ENCODE measurements at regions of chr3 and their contacts with region 1.

Region 1: DNA sequence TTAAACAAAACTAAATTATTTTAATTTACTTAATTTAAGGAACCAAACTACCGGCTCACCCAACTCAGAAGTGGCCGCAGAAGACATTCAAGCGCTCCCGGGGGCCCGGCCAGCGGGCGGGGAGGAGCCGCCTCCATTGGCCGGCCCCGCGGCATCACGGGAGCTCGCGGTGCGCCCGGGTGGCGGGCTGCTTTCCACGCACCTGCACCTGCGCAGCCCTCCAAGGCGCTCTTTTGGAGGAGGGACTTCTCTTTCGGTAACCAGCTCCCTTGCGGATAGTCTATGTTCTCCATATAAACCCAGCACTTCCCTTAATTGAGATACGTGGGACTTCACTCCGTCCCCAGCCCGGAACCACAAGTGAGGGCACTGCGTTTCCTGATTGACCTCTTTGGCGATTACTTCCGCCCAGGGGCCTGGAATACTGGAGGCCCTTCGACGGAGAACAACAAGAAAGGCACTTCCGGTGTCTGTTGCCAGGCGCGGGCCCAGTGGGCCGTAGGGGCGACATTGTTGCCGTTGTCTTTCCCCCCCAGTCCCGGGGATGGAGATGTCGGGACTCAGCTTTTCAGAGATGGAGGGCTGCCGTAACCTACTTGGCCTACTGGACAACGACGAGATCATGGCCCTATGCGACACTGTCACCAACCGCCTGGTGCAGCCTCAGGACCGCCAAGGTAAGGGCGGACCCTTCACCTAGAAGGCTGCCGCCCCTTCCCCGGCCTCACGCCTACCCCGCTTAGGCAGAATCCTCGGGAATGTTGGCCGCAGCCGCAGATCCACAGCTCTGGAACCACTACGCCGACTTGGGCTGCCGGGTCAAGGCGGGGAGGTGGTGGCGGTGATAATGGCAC is at the start of gene C3orf38:
- DNase-seq: peak; percentile 95
- H3K4me3 Mint-ChIP-seq: peak within 1 kb of the TSS; percentile 96
- H3K27ac Mint-ChIP-seq: peak within 1 kb of the TSS; percentile 99
- H3K4me1 Mint-ChIP-seq: peaks cover 39% of the 10 kb centered on the region
- H3K27me3 Mint-ChIP-seq: no peaks in the 10 kb centered on the region
- total RNA-seq, gene C3orf38: 19.9 and 24.1 TPM in 2 replicates

Region 2: GRCh38 chr3:87227104-87227834 is 922.5 kb before region 1 on chr3 and contains the start of gene CHMP2B:
- intact Hi-C with region 1: loop called (anchors 10 kb)
- DNase-seq: peak; percentile 97
- H3K4me3 Mint-ChIP-seq: peak within 1 kb of the TSS; percentile 100
- H3K27ac Mint-ChIP-seq: peak within 1 kb of the TSS; percentile 98
- H3K4me1 Mint-ChIP-seq: peaks cover 33% of the 10 kb centered on the region
- H3K27me3 Mint-ChIP-seq: peaks cover 25% of the 10 kb centered on the region
- total RNA-seq, gene CHMP2B: 25.3 and 27.2 TPM in 2 replicates

Region 3: DNA sequence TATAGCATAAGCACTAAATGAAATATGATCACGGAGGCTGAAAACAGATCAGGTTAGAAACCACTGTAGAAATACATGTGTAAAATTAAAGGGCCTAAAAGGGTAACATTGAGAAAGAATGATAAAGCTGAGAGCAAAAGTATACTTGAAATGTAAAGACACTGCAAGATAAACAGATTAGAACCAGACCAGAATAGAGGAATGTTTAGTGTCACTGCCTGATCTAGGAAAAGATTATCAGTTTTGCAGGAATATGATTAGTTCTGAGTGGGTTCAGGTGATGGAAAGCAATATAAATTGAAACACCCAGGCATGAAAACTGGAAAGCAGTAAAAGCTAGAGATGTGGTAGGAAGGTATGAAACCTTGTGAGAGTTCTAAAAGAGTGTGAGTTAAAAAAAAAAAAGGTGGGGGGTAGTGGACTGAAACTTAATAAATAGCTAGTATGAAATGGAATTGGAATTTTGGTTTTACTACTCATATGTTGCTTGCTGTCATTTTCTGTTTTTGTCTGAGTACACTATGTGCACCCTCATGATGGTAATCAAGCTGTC is 15.9 kb before region 1 on chr3:
- intact Hi-C with region 1: loop called (anchors 2 kb)
- DNase-seq: no peak
- H3K4me3 Mint-ChIP-seq: no peak overlapping the region
- H3K27ac Mint-ChIP-seq: peak overlapping the region; percentile 46
- H3K4me1 Mint-ChIP-seq: peaks cover 8% of the 10 kb centered on the region
- H3K27me3 Mint-ChIP-seq: no peaks in the 10 kb centered on the region